IMR-90 (cell line): ENCODE measurements at regions of chr2 and their contacts with region 1.

Region 1: DNA sequence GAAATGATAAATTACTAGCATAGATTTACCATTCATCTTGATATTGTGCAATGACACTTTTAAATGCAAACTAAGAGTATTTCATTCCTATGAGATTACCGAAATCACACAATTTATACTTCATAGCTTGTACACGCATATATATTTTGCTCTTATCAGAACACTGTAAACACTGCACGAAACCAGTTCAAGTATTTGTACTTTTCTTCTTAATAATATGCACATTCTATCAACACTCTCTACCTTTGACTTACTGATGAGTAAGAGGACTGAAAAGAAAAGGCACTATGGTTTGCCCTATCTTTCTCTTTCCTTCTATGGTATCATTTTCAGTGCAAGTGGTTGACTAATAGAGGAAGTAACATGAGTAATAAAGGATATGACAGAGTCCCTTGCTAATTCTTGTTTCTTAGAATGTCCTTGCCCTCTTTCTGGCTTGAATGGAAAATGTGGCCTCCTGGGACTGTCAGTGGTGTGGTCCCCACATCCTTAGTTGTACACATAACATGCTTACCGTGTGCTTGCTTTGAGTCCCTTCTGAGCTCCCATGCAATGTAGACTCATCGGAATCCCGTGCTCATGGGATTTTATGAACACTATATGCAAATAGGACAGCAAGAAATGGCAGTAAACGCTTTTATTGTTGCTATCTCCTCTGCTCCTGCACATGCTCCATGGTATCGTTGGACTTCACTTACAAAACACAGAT is 363.5 kb upstream of the TNP1 start:
- DNase-seq: peak; percentile 99
- ATAC-seq: peak; percentile 85
- H3K4me3 ChIP-seq: no peak overlapping the region
- H3K27ac ChIP-seq: peak overlapping the region; percentile 99
- H3K4me1 ChIP-seq: peaks cover 35% of the 10 kb centered on the region
- H3K27me3 ChIP-seq: no peaks in the 10 kb centered on the region
- CTCF ChIP-seq: no peak
- POLR2A ChIP-seq: no peak
- RAD21 ChIP-seq: peak; percentile 28

Region 2: DNA sequence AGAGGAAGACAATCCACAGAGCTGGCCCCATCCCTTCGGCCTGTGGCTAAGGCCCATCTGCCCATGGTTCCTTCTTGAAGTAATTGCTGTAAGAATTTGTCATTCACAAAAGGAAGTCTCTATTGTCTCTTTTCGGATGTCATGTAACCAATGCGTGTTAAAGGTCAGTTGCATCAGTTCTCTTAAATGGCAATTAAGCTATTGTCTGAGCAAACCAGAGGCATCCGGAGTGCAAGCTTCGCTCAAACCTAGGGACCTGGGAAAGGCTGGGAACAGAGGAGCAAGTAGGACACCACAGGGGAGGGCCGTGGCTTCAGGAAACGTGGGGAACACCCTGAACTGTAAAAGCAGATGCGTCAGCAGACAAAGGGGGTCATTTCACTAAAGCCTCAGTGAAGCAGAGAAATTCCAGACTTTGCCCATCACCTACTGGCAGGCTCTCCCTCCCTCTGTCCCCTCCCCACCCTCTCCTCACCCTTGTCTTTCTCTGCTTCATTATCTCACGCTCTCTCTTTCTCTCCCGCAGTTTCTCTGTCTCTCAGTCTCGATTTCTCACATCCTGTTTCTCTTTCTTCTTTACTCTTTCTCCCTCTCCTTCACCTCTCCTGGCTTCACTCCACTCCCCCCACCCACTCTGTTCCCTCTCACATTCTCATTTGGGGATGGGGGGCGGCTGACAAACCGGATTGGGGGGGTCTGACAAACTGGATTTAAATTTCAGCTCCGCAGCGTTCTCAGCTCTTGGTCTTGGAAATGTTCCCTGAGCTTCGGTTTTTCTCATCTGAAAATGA is 158.9 kb before region 1 on chr2:
- CTCF ChIA-PET with region 1: no interaction called
- POLR2A ChIA-PET with region 1: no interaction called
- dilution Hi-C with region 1: no loop called
- in situ Hi-C with region 1: no loop called
- intact Hi-C with region 1: loop called (anchors 2 kb)
- DNase-seq: no peak
- ATAC-seq: no peak
- H3K4me3 ChIP-seq: no peak overlapping the region
- H3K27ac ChIP-seq: peak overlapping the region; percentile 62
- H3K4me1 ChIP-seq: peaks cover 14% of the 10 kb centered on the region
- H3K27me3 ChIP-seq: no peaks in the 10 kb centered on the region
- CTCF ChIP-seq: no peak
- POLR2A ChIP-seq: no peak
- RAD21 ChIP-seq: no peak

Region 3: DNA sequence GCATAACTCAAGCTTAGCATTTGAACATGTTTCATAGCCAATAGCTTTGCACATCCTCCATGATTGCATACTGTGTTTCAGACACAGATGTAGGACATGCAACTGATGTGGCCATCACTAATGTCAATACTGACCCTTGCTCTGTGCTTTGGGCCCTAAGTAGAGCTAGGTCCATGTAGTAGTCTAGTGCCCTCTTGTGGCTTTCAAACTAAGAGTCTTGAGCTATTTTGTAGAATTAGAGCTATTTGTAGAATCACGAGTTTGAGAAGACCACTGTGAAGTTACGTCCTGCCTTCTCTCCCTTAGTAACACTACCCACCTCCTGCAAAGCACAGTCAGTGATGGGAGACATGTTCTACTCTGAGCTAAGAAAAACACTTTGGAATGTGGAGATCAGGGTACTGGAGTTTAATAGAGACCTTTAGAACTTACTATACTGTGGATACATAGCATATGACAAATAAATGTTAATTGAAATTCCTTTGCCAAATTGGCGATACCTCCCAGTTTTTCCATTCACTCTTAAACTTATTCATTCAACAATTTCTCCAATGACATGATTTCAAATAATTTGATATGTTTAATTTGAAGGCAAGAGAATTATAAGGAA is 57.0 kb before region 1 on chr2:
- CTCF ChIA-PET with region 1: interaction called, 4 read pairs
- POLR2A ChIA-PET with region 1: no interaction called
- dilution Hi-C with region 1: no loop called
- in situ Hi-C with region 1: no loop called
- intact Hi-C with region 1: loop called (anchors 5 kb)
- DNase-seq: peak; percentile 73
- ATAC-seq: peak; percentile 49
- H3K4me3 ChIP-seq: no peak overlapping the region
- H3K27ac ChIP-seq: peak overlapping the region; percentile 65
- H3K4me1 ChIP-seq: peaks cover 19% of the 10 kb centered on the region
- H3K27me3 ChIP-seq: no peaks in the 10 kb centered on the region
- CTCF ChIP-seq: peak; percentile 66
- POLR2A ChIP-seq: no peak
- RAD21 ChIP-seq: peak; percentile 85

Region 4: GRCh38 chr2:217289877-217290279 is 66.5 kb after region 1 on chr2:
- CTCF ChIA-PET with region 1: interaction called, 4 read pairs
- POLR2A ChIA-PET with region 1: no interaction called
- dilution Hi-C with region 1: no loop called
- in situ Hi-C with region 1: no loop called
- intact Hi-C with region 1: loop called (anchors 2 kb)
- DNase-seq: peak; percentile 69
- ATAC-seq: peak; percentile 31
- H3K4me3 ChIP-seq: no peak overlapping the region
- H3K27ac ChIP-seq: peak overlapping the region; percentile 69
- H3K4me1 ChIP-seq: peaks cover 30% of the 10 kb centered on the region
- H3K27me3 ChIP-seq: no peaks in the 10 kb centered on the region
- CTCF ChIP-seq: no peak
- POLR2A ChIP-seq: no peak
- RAD21 ChIP-seq: no peak

Region 5: DNA sequence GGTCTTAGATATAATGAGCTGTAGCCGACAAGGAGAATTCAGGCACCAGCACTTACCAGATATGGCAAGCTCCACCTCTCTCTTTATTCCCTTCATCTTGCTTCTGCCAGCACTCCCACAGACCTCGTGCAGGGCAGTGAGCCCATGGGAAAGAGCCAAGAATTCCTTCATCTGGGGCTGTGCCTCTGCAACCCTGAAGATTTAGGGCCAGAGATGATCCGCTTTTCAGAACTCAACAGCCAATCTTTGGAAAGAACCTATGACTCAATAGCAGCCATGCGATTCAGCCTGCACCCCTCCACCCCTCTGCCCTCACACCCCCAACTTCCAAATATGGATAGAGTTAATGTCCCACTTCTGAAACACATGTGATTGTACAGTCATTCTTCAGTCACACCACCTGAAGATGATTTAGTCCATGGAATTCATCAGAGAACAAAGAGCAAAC is 170.2 kb after region 1 on chr2:
- CTCF ChIA-PET with region 1: no interaction called
- POLR2A ChIA-PET with region 1: no interaction called
- dilution Hi-C with region 1: no loop called
- in situ Hi-C with region 1: no loop called
- intact Hi-C with region 1: loop called (anchors 5 kb)
- DNase-seq: peak; percentile 96
- ATAC-seq: peak; percentile 80
- H3K4me3 ChIP-seq: no peak overlapping the region
- H3K27ac ChIP-seq: peak overlapping the region; percentile 81
- H3K4me1 ChIP-seq: peaks cover 24% of the 10 kb centered on the region
- H3K27me3 ChIP-seq: no peaks in the 10 kb centered on the region
- CTCF ChIP-seq: no peak
- POLR2A ChIP-seq: no peak
- RAD21 ChIP-seq: no peak